Aorta (tissue), 5 donors: ENCODE measurements at regions of chr20 and their contacts with region 1.

Region 1: GRCh38 chr20:45934586-45935415 is at the start of gene PCIF1:
- DNase-seq: peak; percentile 99
- ATAC-seq: peak; percentile 96
- H3K4me3 ChIP-seq: peak within 1 kb of the TSS; percentile 59 to 77
- H3K27ac ChIP-seq: peak within 1 kb of the TSS; percentile 80 to 81
- H3K4me1 ChIP-seq: no peaks in the 10 kb centered on the region
- H3K27me3 ChIP-seq: no peaks in the 10 kb centered on the region
- total RNA-seq, gene PCIF1: 32.5 to 33.3 TPM

Region 2: GRCh38 chr20:45890985-45891983 is 43.5 kb before region 1 on chr20 and contains the starts of genes CTSA and NEURL2:
- intact Hi-C with region 1: loop called in 1 of 2 experiments (anchors 1 kb)
- DNase-seq: peak; percentile 94 to 97
- ATAC-seq: peak; percentile 93
- H3K4me3 ChIP-seq: peak within 1 kb of the TSS; percentile 42 to 55
- H3K27ac ChIP-seq: peak within 1 kb of the TSS in 1 of 2 donors; percentile 50
- H3K4me1 ChIP-seq: no peaks in the 10 kb centered on the region
- H3K27me3 ChIP-seq: no peaks in the 10 kb centered on the region
- total RNA-seq, gene CTSA: 83.4 to 140 TPM
- total RNA-seq, gene NEURL2: 9.9 to 32.9 TPM

Region 3: GRCh38 chr20:45911486-45912343 is 23.1 kb before region 1 on chr20 and contains the start of gene PLTP:
- intact Hi-C with region 1: loop called in 1 of 2 experiments (anchors 1 kb)
- DNase-seq: peak; percentile 87 to 92
- ATAC-seq: peak; percentile 73
- H3K4me3 ChIP-seq: peak within 1 kb of the TSS; percentile 15 to 59
- H3K27ac ChIP-seq: peak within 1 kb of the TSS in 1 of 2 donors; percentile 16
- H3K4me1 ChIP-seq: no peaks in the 10 kb centered on the region
- H3K27me3 ChIP-seq: no peaks in the 10 kb centered on the region
- total RNA-seq, gene PLTP: 113 to 445 TPM